H1 (cell line): ENCODE measurements at regions of chr7 and their contacts with region 1.

Region 1: DNA sequence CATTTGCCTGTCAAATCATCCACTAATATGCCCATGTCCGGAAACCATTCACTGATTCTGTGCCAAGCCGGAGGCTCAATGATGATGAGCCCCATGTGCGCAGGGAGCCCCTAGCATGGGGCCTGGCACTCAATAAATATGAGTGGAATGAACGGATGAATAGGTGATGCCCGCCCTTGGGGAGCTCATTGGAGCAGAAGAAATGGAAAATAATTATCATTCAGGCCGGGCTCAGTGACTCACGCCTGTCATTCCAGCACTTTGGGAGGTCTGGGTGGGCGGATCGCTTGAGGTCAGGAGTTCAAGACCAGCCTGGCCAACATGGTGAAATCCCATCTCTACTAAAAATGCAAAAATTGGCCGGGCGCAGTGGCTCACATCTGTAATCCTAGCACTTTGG is 11.0 kb downstream of the RHBDD2 start:
- DNase-seq: no peak
- H3K4me3 ChIP-seq: no peak overlapping the region
- H3K27ac ChIP-seq: no peak overlapping the region
- H3K4me1 ChIP-seq: peaks cover 0 to 5% (median 3%) of the 10 kb centered on the region in 4 experiments; a peak in 4 of 7 replicates
- H3K27me3 ChIP-seq: no peaks in the 10 kb centered on the region
- CTCF ChIP-seq: no peak
- EP300 ChIP-seq: no peak
- POLR2A ChIP-seq: no peak
- RAD21 ChIP-seq: no peak

Region 2: DNA sequence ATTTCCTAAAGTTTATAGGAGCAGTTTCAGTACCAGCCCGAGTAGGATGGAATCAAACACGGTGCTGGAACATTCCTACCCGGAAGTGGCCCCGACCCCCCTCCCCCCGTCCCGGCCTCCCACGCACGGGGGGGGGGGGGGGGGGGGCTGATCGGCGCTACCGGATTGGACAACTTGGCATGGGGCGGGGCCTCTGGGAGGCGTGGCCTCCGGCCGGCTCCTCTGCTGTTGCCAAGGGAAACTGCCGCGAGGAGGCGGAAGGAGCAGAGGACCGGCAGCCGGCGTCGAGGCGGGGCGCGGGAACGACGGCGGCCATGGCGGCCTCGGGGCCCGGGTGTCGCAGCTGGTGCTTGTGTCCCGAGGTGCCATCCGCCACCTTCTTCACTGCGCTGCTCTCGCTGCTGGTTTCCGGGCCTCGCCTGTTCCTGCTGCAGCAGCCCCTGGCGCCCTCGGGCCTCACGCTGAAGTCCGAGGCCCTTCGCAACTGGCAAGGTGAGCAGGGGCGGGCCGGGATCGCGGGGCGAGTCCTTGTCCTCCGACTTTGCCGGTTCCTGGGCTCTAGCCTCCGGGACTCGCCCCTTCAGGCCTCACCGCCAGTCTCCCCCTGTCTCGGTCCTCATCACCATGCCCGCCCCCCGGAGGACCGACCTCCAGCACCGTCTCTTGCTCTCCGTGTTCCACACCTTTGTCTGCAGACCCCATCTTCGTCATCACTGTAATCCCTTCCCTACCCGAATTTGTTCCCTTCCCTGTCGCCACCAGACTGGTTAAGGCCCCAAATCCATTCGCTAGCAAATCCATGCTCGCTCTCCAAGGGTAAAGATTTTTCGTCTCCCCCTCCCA is 10.8 kb before region 1 on chr7 and contains the start of gene RHBDD2:
- CTCF ChIA-PET with region 1: interaction called, 3 read pairs
- POLR2A ChIA-PET with region 1: interaction called, 22 read pairs
- DNase-seq: peak; percentile 70 to 94
- H3K4me3 ChIP-seq: peak within 1 kb of the TSS; percentile 73 to 97 (median 81)
- H3K27ac ChIP-seq: peak within 1 kb of the TSS; percentile 82
- H3K4me1 ChIP-seq: peaks cover 5 to 11% (median 9%) of the 10 kb centered on the region in 4 experiments
- H3K27me3 ChIP-seq: peaks cover 0 to 8% (median under 1%) of the 10 kb centered on the region in 4 experiments; a peak in 1 of 7 replicates
- CTCF ChIP-seq: peak in 1 of 3 experiments; percentile 13; a peak in 1 of 4 replicates
- EP300 ChIP-seq: no peak
- POLR2A ChIP-seq: peak; percentile 93 to 99
- RAD21 ChIP-seq: no peak
- total RNA-seq, gene RHBDD2: 28.3 and 29.5 TPM in 2 replicates

Region 3: GRCh38 chr7:75905785-75906604 is 16.2 kb after region 1 on chr7:
- CTCF ChIA-PET with region 1: interaction called, 5 read pairs
- POLR2A ChIA-PET with region 1: interaction called, 23 read pairs
- DNase-seq: peak in 1 of 2 experiments; percentile 67
- H3K4me3 ChIP-seq: no peak overlapping the region
- H3K27ac ChIP-seq: peak overlapping the region; percentile 48; the same call in 1 of the 2 replicates
- H3K4me1 ChIP-seq: peaks cover 0 to 8% (median 5%) of the 10 kb centered on the region in 4 experiments; a peak in 5 of 7 replicates
- H3K27me3 ChIP-seq: no peaks in the 10 kb centered on the region
- CTCF ChIP-seq: no peak
- EP300 ChIP-seq: no peak
- POLR2A ChIP-seq: peak in 1 of 2 experiments; percentile 23; a peak in 1 of 3 replicates
- RAD21 ChIP-seq: no peak